Heart right ventricle (tissue), 16 donors: ENCODE measurements at regions of chr16 and their contacts with region 1.

Region 1: GRCh38 chr16:59370717-59371116 is 636.6 kb upstream of the GOT2 start:
- DNase-seq: no peak
- ATAC-seq: no peak
- H3K4me3 ChIP-seq: no peak overlapping the region
- H3K27ac ChIP-seq: no peak overlapping the region
- H3K4me1 ChIP-seq: no peaks in the 10 kb centered on the region
- H3K27me3 ChIP-seq: no peaks in the 10 kb centered on the region
- CTCF ChIP-seq: no peak

Region 2: DNA sequence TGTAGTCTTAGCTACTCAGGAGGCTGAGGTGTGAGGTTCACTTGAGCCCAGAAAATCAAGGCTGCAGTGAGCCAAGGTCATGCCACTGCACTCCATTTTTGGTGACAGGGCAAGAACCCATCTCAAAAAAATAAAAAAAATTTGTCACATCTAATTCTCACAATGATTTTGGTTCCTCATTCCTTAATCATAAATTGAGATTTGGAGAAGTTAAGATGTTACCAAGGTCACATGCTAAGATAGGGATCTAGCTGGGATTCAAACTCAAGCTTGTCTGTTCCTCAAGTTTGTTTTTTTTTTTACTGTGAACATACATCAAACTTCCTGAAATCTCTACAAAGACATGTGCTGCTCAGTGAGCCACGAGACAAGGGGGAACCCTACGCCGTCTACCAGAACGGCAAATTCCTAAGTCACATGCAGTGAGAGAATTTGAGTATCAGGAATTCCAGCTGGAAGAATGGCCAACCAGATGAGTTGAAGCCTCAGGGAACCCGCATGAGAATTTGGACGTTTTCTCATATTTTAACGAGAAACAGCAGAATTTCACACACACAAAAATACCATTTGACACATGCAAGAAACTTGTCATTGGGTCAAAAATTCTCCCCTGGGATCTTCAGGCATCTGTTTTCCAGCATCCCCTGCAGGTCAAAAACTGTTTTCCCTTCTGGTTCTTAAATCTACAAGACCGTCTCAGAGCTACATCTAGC is 222.5 kb before region 1 on chr16:
- intact Hi-C with region 1: no loop called
- DNase-seq: no peak
- ATAC-seq: peak in 2 of 8 donors; percentile 34 to 43
- H3K4me3 ChIP-seq: no peak overlapping the region
- H3K27ac ChIP-seq: no peak overlapping the region
- H3K4me1 ChIP-seq: no peaks in the 10 kb centered on the region
- H3K27me3 ChIP-seq: no peaks in the 10 kb centered on the region
- CTCF ChIP-seq: no peak

Region 3: GRCh38 chr16:59355704-59356103 is 15.0 kb before region 1 on chr16:
- intact Hi-C with region 1: loop called in 1 of 10 experiments (anchors 1 kb)
- DNase-seq: no peak
- ATAC-seq: no peak
- H3K4me3 ChIP-seq: no peak overlapping the region
- H3K27ac ChIP-seq: no peak overlapping the region
- H3K4me1 ChIP-seq: no peaks in the 10 kb centered on the region
- H3K27me3 ChIP-seq: peaks cover 0 to 4% (median 0%) of the 10 kb centered on the region in 7 donors
- CTCF ChIP-seq: no peak

Region 4: GRCh38 chr16:59432896-59433295 is 62.2 kb after region 1 on chr16:
- intact Hi-C with region 1: no loop called
- DNase-seq: no peak
- ATAC-seq: no peak
- H3K4me3 ChIP-seq: no peak overlapping the region
- H3K27ac ChIP-seq: no peak overlapping the region
- H3K4me1 ChIP-seq: no peaks in the 10 kb centered on the region
- H3K27me3 ChIP-seq: no peaks in the 10 kb centered on the region
- CTCF ChIP-seq: no peak